ENCODE measurements at regions of chr17 and their contacts with region 1.

Region 1: DNA sequence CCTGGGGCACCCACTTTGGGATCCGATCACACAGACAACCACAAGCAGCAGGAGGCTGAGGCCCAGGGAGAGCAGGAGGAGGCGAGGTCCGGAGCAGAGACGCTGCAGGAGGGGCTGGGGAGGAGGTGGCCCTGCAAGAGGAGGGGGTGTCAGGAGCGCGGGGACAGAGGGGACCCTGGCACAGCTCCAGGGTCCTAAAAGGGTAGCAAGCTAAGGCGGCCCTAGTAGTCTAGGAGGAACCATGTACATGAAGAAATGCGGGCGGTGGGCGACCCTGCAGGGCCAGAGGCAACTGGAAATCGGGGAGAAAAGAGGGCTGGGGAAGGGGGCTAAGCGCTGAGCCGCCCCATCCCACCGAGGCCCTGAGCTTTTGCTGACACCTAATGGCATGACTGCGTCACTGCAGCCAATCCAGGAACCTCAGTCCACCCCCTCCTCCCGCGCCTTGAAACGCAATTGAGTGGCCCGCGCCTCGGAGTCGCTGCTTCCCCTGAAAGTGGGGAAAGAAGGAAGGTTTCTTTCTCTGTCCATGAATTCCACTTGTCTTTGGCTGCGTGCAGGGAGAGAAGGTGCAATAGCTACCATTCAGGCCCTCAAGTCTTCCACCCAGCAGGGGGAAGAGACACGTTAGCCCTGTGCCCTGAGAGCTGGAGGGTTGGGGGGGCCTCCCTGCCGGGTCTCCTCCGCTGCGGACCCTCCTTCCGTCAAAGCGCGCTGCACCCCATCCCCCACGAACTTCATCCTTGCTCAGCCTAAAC is 1.8 kb downstream of the ASGR1 start:
- DNase-seq: peak in 4 of 5 donors; percentile 57 to 70 (median 66)
- ATAC-seq: peak; percentile 69 to 84 (median 74)
- H3K4me3 ChIP-seq: peak overlapping the region in 11 of 12 donors; percentile 15 to 56 (median 46)
- H3K27ac ChIP-seq: peak overlapping the region in 1 of 12 donors; percentile 24
- H3K4me1 ChIP-seq: peaks cover 0 to 30% (median 12%) of the 10 kb centered on the region in 12 donors
- H3K27me3 ChIP-seq: peaks cover 0 to 23% (median 17%) of the 10 kb centered on the region in 9 donors
- CTCF ChIP-seq: peak; percentile 76 to 92 (median 84)
- POLR2A ChIP-seq: no peak

Region 2: DNA sequence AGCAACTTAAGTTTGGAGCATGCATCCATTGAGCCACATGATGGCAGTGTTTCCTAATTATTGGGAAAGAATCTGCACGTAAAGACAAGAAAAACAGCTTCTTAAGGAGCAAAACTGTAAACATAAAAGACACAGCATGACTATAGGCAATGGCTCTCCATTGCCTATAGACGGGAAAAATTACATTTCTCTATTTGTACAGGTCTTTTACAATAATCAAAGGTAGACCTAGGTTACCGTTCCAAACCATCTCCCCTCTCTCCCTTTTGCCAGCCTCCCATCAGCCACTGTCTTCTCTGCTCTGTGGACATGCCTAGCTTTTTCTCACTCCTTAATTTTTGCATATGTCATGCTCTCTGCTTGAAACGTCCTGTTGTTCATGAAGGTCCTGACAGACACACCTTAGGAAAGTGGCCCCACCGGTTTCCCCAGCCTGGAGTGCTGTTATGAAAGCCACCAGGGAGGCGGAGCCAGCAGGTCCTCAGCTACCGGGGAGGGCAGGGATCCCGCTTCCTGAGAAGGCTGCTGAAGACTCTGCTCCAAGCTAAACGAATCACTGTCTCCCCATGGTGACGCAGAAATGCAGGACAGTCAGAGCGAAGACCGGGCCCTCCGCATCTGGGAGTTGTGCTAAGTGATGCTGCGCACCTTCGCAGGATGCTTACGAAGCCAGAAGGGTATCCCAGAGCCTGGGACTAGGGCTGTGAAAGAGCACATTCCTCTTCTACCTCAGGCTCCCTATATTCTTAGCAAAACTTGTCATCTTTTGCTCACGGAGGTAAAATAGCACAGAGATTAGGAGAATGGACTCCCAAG is 131.3 kb before region 1 on chr17:
- intact Hi-C with region 1: loop called in 5 of 10 experiments (anchors 1 to 5 kb)
- DNase-seq: no peak
- ATAC-seq: peak in 2 of 4 donors; percentile 31 to 48
- H3K4me3 ChIP-seq: peak overlapping the region in 9 of 12 donors; percentile 22 to 46 (median 26)
- H3K27ac ChIP-seq: peak overlapping the region in 2 of 12 donors; percentile 24 to 68
- H3K4me1 ChIP-seq: peaks cover 0 to 41% (median 28%) of the 10 kb centered on the region in 12 donors
- H3K27me3 ChIP-seq: peaks cover 0 to 43% (median 21%) of the 10 kb centered on the region in 9 donors
- CTCF ChIP-seq: peak; percentile 65 to 89 (median 80)
- POLR2A ChIP-seq: no peak

Region 3: DNA sequence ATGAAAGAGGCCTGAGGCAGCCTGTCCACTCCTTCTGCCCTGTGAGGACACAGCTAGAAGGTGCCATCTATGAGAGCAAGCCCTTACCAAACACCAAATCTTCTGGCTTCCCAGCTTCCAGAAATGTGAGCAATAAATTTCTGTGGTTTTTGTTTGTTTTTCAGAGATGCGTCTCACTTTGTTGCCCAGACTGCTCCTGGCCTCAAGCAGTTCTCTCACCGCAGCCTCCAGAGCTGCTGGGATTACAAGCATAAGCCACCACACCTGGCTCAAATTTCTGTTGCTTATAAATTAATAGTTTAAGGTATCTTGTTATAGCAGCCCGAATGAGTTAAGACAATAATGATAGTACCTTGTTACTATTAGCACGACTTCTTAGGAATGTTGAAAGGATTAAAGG is 121.0 kb before region 1 on chr17:
- intact Hi-C with region 1: loop called in 8 of 10 experiments (anchors 1 to 5 kb)
- DNase-seq: no peak
- ATAC-seq: no peak
- H3K4me3 ChIP-seq: no peak overlapping the region
- H3K27ac ChIP-seq: no peak overlapping the region
- H3K4me1 ChIP-seq: no peaks in the 10 kb centered on the region
- H3K27me3 ChIP-seq: peaks cover 0 to 7% (median 0%) of the 10 kb centered on the region in 9 donors
- CTCF ChIP-seq: no peak
- POLR2A ChIP-seq: no peak

Measured in heart left ventricle (tissue), 16 donors.